ENCODE measurements at regions of chr6 and their contacts with region 1.

Region 1: DNA sequence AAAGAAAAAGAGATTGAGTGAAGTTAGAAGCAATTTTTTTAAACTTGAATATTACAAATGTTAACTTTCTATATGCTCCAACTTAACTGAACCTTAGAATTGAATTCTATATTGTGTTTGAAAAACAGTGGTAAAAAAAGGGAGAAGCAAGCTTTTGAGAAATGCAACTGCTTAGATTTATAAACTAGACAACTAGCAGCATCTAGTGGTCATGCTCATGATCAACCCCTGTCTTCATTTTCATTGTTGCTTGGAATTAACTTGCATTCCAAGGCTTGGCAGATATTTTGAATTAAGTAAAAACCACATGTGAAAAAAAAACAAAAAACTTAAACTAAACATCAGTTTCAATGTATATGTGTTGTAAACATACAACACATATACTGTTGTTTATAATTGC is 113.1 kb downstream of the C6orf58 start:
- DNase-seq: no peak
- H3K4me3 ChIP-seq: no peak overlapping the region
- H3K4me3 Mint-ChIP-seq: no peak overlapping the region
- H3K27ac Mint-ChIP-seq: no peak overlapping the region
- H3K4me1 ChIP-seq: no peaks in the 10 kb centered on the region
- H3K4me1 Mint-ChIP-seq: no peaks in the 10 kb centered on the region
- H3K27me3 ChIP-seq: no peaks in the 10 kb centered on the region
- H3K27me3 Mint-ChIP-seq: no peaks in the 10 kb centered on the region
- CTCF ChIP-seq: peak; percentile 32 to 47

Region 2: DNA sequence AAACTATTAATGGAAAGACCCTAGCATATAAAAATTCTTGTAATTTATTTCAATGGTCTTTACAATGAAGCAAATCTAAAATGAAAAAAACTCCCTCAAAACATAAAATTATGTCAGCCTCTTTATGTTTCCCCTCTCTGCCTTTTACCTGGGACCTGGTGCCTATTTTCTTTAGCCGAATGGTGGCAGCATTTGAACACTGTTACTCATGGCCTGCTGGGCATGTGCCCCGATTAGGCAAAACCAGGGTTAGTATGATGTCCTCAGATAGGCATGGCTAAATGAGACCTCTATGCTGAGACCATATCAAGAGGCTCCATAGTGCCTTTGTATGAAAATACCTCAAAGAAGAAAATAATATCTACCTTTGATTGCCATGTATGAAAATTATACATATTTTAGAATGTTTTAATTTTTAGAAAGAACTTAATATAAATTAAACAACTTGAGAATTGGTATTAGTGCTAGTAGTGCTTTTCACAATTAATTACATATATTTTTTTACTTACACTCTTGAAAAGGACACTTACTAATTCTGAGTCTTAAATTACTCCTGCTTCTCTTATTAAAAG is 135.6 kb before region 1 on chr6:
- CTCF ChIA-PET with region 1: no interaction called
- POLR2A ChIA-PET with region 1: no interaction called
- intact Hi-C with region 1: loop called (anchors 5 kb)
- DNase-seq: peak in 1 of 2 experiments; percentile 24
- H3K4me3 ChIP-seq: no peak overlapping the region
- H3K4me3 Mint-ChIP-seq: no peak overlapping the region
- H3K27ac Mint-ChIP-seq: no peak overlapping the region
- H3K4me1 ChIP-seq: no peaks in the 10 kb centered on the region
- H3K4me1 Mint-ChIP-seq: no peaks in the 10 kb centered on the region
- H3K27me3 ChIP-seq: no peaks in the 10 kb centered on the region
- H3K27me3 Mint-ChIP-seq: peaks cover 4% of the 10 kb centered on the region
- CTCF ChIP-seq: peak; percentile 22 to 44

Region 3: DNA sequence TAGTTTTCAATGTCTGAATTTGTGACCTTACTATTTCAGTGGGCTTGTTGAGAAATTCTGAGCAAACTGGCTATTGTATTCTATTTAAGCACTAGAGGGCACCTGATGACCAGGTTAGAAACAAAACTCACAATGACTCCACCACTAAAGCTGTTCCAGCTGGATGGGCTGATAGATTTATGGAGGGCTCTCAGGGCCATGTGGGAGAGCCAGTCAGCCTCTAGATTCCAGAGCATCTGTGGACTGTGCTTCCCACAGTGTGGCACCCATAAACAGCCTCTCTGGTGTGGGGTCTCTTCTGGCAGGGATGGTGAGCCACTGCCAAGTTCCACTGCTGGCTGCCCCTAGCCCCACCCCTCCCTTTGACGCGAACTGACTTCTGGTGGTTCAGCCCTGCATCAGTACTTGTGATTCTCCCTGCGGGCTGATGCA is 83.9 kb before region 1 on chr6:
- CTCF ChIA-PET with region 1: interaction called, 4 read pairs
- POLR2A ChIA-PET with region 1: no interaction called
- intact Hi-C with region 1: loop called (anchors 1 kb)
- DNase-seq: peak in 1 of 2 experiments; percentile 29
- H3K4me3 ChIP-seq: no peak overlapping the region
- H3K4me3 Mint-ChIP-seq: no peak overlapping the region
- H3K27ac Mint-ChIP-seq: no peak overlapping the region
- H3K4me1 ChIP-seq: no peaks in the 10 kb centered on the region
- H3K4me1 Mint-ChIP-seq: no peaks in the 10 kb centered on the region
- H3K27me3 ChIP-seq: no peaks in the 10 kb centered on the region
- H3K27me3 Mint-ChIP-seq: peaks cover 8% of the 10 kb centered on the region
- CTCF ChIP-seq: peak; percentile 27 to 31

Measured in Caco-2 (cell line).